ENCODE measurements at regions of chr16 and their contacts with region 1.

Region 1: DNA sequence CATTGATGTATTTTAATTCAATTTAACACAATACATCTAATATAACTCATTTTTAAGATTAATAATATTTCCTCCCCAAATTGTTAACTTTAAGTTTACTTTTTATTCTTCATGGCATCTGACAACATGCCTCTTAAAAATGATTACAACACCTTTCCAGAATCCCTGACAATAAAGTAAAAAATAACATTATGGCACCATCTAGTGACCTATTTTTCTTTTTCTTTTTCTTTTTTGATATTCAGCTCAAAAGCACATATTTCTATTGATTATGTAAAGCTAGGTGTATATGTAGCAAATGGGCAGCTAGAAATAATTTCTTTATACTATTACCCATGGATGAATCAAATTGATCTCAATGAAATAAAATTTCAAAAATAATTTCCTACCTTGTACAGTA is 834.3 kb upstream of the CDH8 start:
- DNase-seq: no peak
- ATAC-seq: peak; percentile 42; the same call in 1 of the 3 replicates
- H3K4me3 ChIP-seq: no peak overlapping the region
- H3K27ac ChIP-seq: no peak overlapping the region
- H3K4me1 ChIP-seq: no peaks in the 10 kb centered on the region
- H3K27me3 ChIP-seq: no peaks in the 10 kb centered on the region
- CTCF ChIP-seq: no peak; a peak in 1 of 6 replicates
- EP300 ChIP-seq: no peak
- POLR2A ChIP-seq: no peak
- RAD21 ChIP-seq: peak; percentile 48

Region 2: GRCh38 chr16:62190426-62190825 is 680.1 kb before region 1 on chr16:
- CTCF ChIA-PET with region 1: interaction called, 10 read pairs
- POLR2A ChIA-PET with region 1: no interaction called
- RAD21 ChIA-PET with region 1: no interaction called
- SMC1A ChIA-PET with region 1: no interaction called
- in situ Hi-C with region 1: no loop called
- intact Hi-C with region 1: no loop called
- DNase-seq: no peak
- ATAC-seq: peak; percentile 52; the same call in 1 of the 3 replicates
- H3K4me3 ChIP-seq: no peak overlapping the region
- H3K27ac ChIP-seq: no peak overlapping the region
- H3K4me1 ChIP-seq: no peaks in the 10 kb centered on the region
- H3K27me3 ChIP-seq: no peaks in the 10 kb centered on the region
- CTCF ChIP-seq: peak; percentile 29 to 43 (median 40); a peak in 4 of 6 replicates
- EP300 ChIP-seq: no peak
- POLR2A ChIP-seq: no peak
- RAD21 ChIP-seq: peak; percentile 48; the same call in 1 of the 2 replicates

Region 3: GRCh38 chr16:62225697-62226280 is 644.8 kb before region 1 on chr16:
- CTCF ChIA-PET with region 1: interaction called, 16 read pairs
- POLR2A ChIA-PET with region 1: no interaction called
- RAD21 ChIA-PET with region 1: interaction called, 5 read pairs
- SMC1A ChIA-PET with region 1: interaction called, 14 read pairs
- in situ Hi-C with region 1: loop called (anchors 10 kb)
- intact Hi-C with region 1: loop called (anchors 1 kb)
- DNase-seq: peak; percentile 24
- ATAC-seq: peak; percentile 100
- H3K4me3 ChIP-seq: no peak overlapping the region
- H3K27ac ChIP-seq: no peak overlapping the region
- H3K4me1 ChIP-seq: no peaks in the 10 kb centered on the region
- H3K27me3 ChIP-seq: no peaks in the 10 kb centered on the region
- CTCF ChIP-seq: peak; percentile 46 to 61 (median 53); a peak in 4 of 6 replicates
- EP300 ChIP-seq: no peak
- POLR2A ChIP-seq: no peak
- RAD21 ChIP-seq: peak; percentile 53; the same call in 1 of the 2 replicates

Region 4: GRCh38 chr16:62638964-62639870 is 231.3 kb before region 1 on chr16:
- CTCF ChIA-PET with region 1: interaction called, 3 read pairs
- POLR2A ChIA-PET with region 1: no interaction called
- RAD21 ChIA-PET with region 1: interaction called, 6 read pairs
- SMC1A ChIA-PET with region 1: no interaction called
- in situ Hi-C with region 1: no loop called
- intact Hi-C with region 1: loop called (anchors 10 kb)
- DNase-seq: peak; percentile 83
- ATAC-seq: peak; percentile 92
- H3K4me3 ChIP-seq: peak overlapping the region; percentile 29; the same call in 1 of the 2 replicates
- H3K27ac ChIP-seq: peak overlapping the region; percentile 82
- H3K4me1 ChIP-seq: peaks cover 16% of the 10 kb centered on the region
- H3K27me3 ChIP-seq: no peaks in the 10 kb centered on the region
- CTCF ChIP-seq: peak in 2 of 3 experiments; percentile 29 to 43; a peak in 4 of 6 replicates
- EP300 ChIP-seq: peak; percentile 5 to 29; a peak in 2 of 4 replicates
- POLR2A ChIP-seq: no peak
- RAD21 ChIP-seq: peak; percentile 71

Measured in GM12878 (cell line).